OCI-LY7 (cell line): ENCODE measurements at regions of chr3 and their contacts with region 1.

Region 1: GRCh38 chr3:30524357-30525040 is 81.9 kb upstream of the TGFBR2 start:
- DNase-seq: no peak
- H3K4me3 ChIP-seq: no peak overlapping the region
- H3K27ac ChIP-seq: no peak overlapping the region
- H3K4me1 ChIP-seq: no peaks in the 10 kb centered on the region
- CTCF ChIP-seq: no peak

Region 2: DNA sequence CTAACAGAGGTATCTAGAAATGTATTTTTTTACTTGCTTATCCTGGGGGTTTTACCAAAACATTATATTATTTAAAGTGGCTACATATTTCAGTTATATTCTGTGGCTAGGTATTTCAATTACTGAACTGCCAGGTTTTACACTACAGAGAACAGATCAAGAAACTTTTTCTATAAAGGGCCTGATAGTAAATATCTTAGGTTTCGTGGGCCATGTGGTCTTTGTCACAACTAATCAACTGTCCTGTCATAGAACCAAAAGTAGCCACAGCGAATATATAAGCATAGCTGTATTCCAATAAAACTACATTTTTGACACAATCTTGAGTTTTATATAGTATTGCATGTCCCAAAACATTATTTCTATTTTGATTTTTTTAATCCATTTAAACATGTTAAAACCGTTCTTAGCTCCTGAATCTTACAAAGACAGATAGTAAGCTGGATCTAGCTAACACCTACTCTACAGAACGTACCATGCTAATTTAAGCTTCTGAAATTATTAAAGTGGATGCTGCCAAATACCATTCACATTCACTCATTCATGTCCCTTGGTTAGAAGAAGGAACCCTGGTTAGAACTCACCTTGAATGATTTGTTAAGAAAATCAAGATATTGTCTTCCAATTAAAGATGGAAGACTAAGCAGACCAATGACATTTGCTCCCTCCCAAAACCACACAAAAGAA is 36.3 kb before region 1 on chr3:
- CTCF ChIA-PET with region 1: no interaction called
- POLR2A ChIA-PET with region 1: interaction called, 3 read pairs
- intact Hi-C with region 1: loop called (anchors 1 kb)
- DNase-seq: no peak
- H3K4me3 ChIP-seq: no peak overlapping the region
- H3K27ac ChIP-seq: no peak overlapping the region
- H3K4me1 ChIP-seq: no peaks in the 10 kb centered on the region
- CTCF ChIP-seq: no peak

Region 3: DNA sequence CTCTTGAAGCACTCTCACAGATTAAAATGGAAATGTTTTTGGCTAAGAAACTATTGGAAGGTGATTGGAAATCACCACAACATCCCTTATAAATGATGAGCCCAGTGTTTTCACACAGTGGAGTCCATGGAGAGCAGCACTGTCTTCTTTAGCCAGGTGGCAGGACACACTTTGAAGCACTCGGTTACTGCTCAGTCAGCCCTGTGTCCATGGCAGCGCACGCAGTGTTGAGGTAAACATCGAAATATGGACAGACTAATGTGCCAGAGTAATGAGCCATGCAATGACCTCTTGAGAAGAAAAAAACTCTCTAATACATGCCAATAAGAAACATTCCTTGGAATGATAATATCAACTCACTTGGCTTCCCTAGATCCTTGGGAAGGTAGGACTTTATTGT is 148.5 kb after region 1 on chr3:
- CTCF ChIA-PET with region 1: no interaction called
- POLR2A ChIA-PET with region 1: no interaction called
- intact Hi-C with region 1: no loop called
- DNase-seq: no peak
- H3K4me3 ChIP-seq: no peak overlapping the region
- H3K27ac ChIP-seq: no peak overlapping the region
- H3K4me1 ChIP-seq: peaks cover 8% of the 10 kb centered on the region
- CTCF ChIP-seq: no peak

Region 4: DNA sequence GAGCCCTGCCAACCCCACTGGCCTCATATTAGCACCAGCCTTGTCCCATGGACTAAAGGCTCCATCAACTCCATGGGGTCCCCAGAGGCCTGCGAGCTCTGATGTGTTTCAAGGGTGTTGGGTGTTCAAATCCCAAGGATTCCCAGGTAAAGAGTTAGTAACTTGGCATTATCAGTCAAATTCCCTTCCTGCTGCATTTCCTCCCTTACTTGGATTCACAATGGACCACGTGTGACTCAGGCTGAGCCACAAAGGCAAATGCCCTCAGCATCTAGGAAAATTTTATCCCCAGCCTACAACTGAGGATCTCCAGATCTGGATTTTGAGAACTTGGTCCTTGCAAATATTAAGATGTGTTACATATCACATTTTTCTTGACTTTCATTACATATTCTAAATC is 311.2 kb after region 1 on chr3:
- CTCF ChIA-PET with region 1: no interaction called
- POLR2A ChIA-PET with region 1: no interaction called
- intact Hi-C with region 1: no loop called
- DNase-seq: no peak
- H3K4me3 ChIP-seq: no peak overlapping the region
- H3K27ac ChIP-seq: no peak overlapping the region
- H3K4me1 ChIP-seq: no peaks in the 10 kb centered on the region
- CTCF ChIP-seq: no peak